Adrenal gland (tissue), 19 donors: ENCODE measurements at regions of chr22 and their contacts with region 1.

Region 1: DNA sequence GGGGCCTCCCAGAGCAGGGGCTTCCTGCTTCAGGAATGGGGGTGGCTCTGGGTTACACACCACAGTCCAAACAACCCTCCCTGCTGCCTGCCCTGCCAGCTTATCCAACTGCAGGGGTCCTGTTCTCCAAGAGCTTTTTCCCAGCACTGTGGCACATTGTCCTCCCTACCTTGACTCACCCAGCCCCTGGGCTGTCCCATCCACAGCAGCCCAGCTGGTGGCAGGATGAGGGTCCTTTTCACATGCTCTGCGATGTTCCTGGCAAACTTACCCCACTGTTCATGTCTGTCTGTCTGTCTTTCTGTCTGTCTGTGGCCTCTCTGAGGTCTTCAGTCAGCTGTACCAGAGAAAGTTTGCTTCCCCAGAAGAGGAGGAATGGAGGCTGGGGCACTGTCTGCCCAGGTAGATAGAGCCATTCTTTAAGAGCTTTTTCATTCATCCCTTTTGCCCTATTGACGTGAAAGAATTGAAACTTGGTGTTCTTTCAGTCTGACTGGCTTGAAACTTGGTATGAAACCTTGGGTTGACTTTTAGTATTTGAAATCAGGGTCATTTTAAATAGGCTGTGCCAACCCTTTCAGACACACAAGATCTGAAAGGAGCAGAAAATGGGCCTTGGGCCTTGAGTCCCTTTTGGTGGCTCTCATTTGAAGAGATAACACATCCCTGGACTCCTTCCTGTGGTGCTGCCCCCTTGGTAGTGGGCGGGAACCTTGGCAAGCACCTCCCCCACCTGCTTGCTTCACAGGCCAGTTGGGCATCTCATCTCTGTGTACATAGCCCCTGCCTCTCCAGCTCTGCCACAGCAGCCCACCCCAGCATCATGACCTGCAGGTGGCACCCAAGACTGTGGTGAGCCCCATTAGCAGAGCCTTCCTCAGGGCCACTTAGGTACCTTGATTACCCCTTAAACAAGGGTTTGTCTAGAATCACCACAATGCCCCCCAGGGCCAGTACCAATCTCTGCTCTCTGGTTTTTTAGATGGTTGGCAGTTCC is 74.6 kb upstream of the SUSD2 start:
- DNase-seq: peak in 4 of 7 donors; percentile 17 to 58 (median 34)
- H3K4me3 ChIP-seq: no peak overlapping the region
- H3K27ac ChIP-seq: peak overlapping the region in 4 of 5 donors; percentile 9 to 77 (median 73)
- H3K4me1 ChIP-seq: peaks cover 19 to 22% of the 10 kb centered on the region in 2 donors
- H3K27me3 ChIP-seq: no peaks in the 10 kb centered on the region
- CTCF ChIP-seq: peak in 2 of 6 experiments; percentile 15 to 26
- POLR2A ChIP-seq: no peak

Region 2: GRCh38 chr22:23984430-23984829 is 122.3 kb before region 1 on chr22:
- intact Hi-C with region 1: no loop called
- DNase-seq: peak in 4 of 7 donors; percentile 18 to 51 (median 43)
- H3K4me3 ChIP-seq: no peak overlapping the region
- H3K27ac ChIP-seq: no peak overlapping the region
- H3K4me1 ChIP-seq: no peaks in the 10 kb centered on the region
- H3K27me3 ChIP-seq: no peaks in the 10 kb centered on the region
- CTCF ChIP-seq: peak in 3 of 6 experiments; percentile 25 to 73 (median 28)
- POLR2A ChIP-seq: no peak

Region 3: GRCh38 chr22:24156913-24157821 is 50.5 kb after region 1 on chr22:
- intact Hi-C with region 1: no loop called
- DNase-seq: peak; percentile 76 to 93 (median 86)
- H3K4me3 ChIP-seq: peak overlapping the region; percentile 2 to 87 (median 54)
- H3K27ac ChIP-seq: peak overlapping the region in 2 of 5 donors; percentile 68 to 85
- H3K4me1 ChIP-seq: peaks cover 11 to 34% of the 10 kb centered on the region in 2 donors
- H3K27me3 ChIP-seq: no peaks in the 10 kb centered on the region
- CTCF ChIP-seq: peak; percentile 75 to 87 (median 82)
- POLR2A ChIP-seq: no peak

Region 4: DNA sequence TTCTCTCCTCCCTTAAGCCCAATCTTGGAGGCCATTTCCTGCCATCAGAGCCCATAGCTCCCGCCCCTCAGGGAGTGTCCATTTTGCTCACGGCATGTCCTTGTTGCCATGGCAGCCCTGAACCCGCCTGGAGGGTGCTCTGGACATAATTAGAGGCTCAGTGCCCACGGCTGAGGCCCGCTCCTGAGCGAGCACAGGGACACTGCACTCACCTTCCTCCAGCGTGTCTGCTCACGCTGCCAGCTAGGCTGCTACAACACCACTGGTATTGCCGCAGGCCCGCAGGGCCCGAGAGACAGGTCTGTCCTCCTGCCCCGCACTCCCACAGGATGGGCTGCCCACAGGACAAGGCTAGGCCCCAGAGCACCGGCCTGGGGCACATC is 63.6 kb after region 1 on chr22:
- intact Hi-C with region 1: loop called (anchors 5 to 10 kb)
- DNase-seq: peak in 1 of 7 donors; percentile 91
- H3K4me3 ChIP-seq: no peak overlapping the region
- H3K27ac ChIP-seq: peak overlapping the region in 1 of 5 donors; percentile 57
- H3K4me1 ChIP-seq: peaks cover 0 to 5% of the 10 kb centered on the region in 2 donors
- H3K27me3 ChIP-seq: no peaks in the 10 kb centered on the region
- CTCF ChIP-seq: no peak
- POLR2A ChIP-seq: no peak

Region 5: GRCh38 chr22:24175160-24175808 is 68.6 kb after region 1 on chr22:
- intact Hi-C with region 1: loop called (anchors 5 to 10 kb)
- DNase-seq: peak; percentile 85 to 92 (median 88)
- H3K4me3 ChIP-seq: no peak overlapping the region
- H3K27ac ChIP-seq: peak overlapping the region in 2 of 5 donors; percentile 34 to 82
- H3K4me1 ChIP-seq: peaks cover 0 to 5% of the 10 kb centered on the region in 2 donors
- H3K27me3 ChIP-seq: no peaks in the 10 kb centered on the region
- CTCF ChIP-seq: peak; percentile 67 to 94 (median 91)
- POLR2A ChIP-seq: no peak